HAP-1 (cell line): ENCODE measurements at regions of chr15 and their contacts with region 1.

Region 1: GRCh38 chr15:74127260-74127953 is 3.0 kb upstream of the ISLR2 start:
- DNase-seq: peak; percentile 95 to 99
- H3K4me3 ChIP-seq: peak overlapping the region; percentile 46
- H3K4me1 ChIP-seq: peaks cover 19% of the 10 kb centered on the region
- H3K27me3 ChIP-seq: peaks cover 81% of the 10 kb centered on the region

Region 2: DNA sequence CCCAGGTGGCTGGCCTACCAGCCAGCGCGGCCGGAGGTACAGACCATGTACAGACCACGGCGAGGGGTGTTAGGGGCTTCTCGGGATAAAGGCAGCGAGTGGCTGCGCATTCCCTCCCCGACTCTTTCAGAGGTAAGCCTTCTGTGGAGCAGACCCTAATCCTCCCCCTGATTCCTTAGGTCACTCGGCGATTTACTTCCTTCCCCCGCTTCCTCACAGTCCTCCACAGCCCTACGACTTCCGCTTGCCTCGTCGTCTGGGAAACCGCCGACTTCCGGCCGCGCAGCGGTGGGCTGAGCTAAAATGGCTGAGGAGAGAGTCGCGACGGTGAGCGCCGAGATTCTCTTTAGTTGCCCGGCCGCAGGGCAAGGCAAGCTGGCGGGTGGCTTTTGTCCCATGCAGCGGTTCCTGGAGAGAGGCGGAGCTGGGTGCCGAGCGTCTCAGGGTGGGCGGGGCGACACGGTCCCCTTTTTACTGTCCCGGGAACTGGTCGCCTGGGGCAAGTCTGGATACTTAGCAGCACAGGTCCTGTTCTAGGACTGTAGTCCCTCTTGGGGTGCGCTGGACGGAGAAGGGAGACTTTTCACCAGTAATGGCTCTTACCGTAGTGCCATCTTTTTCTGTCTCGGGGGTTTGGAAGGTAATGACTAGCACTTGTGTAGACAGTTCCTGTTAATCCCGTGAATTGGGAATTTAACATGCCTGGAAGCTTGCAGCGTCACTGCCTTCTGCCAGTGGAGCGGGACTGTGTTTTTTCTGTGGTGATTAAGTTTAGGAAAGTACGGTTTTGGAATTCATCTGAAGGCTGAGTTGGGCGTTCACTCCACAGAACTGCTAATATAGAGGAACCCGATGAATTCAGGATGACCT is 1441.2 kb before region 1 on chr15 and contains the starts of genes BBS4 and HIGD2B:
- in situ Hi-C with region 1: loop called (anchors 25 kb)
- DNase-seq: peak; percentile 100
- H3K4me3 ChIP-seq: peak within 1 kb of the TSS; percentile 45
- H3K4me1 ChIP-seq: peaks cover 7% of the 10 kb centered on the region
- H3K27me3 ChIP-seq: no peaks in the 10 kb centered on the region

Region 3: GRCh38 chr15:72783563-72784237 is 1343.7 kb before region 1 on chr15 and contains the start of gene ADPGK:
- in situ Hi-C with region 1: loop called (anchors 25 kb)
- DNase-seq: peak; percentile 90 to 96
- H3K4me3 ChIP-seq: peak within 1 kb of the TSS; percentile 90
- H3K4me1 ChIP-seq: peaks cover 17% of the 10 kb centered on the region
- H3K27me3 ChIP-seq: no peaks in the 10 kb centered on the region

Region 4: GRCh38 chr15:74433592-74434262 is 306.3 kb after region 1 on chr15 and contains the start of gene SEMA7A:
- in situ Hi-C with region 1: loop called (anchors 10 kb)
- DNase-seq: peak; percentile 94 to 96
- H3K4me3 ChIP-seq: peak within 1 kb of the TSS; percentile 71
- H3K4me1 ChIP-seq: peaks cover 11% of the 10 kb centered on the region
- H3K27me3 ChIP-seq: peaks cover 14% of the 10 kb centered on the region